ENCODE measurements at regions of chr12 and their contacts with region 1.

Region 1: GRCh38 chr12:93390549-93391297 is 13.0 kb downstream of the NUDT4 start:
- DNase-seq: no peak
- H3K4me3 ChIP-seq: no peak overlapping the region
- H3K4me3 Mint-ChIP-seq: no peak overlapping the region
- H3K27ac ChIP-seq: no peak overlapping the region
- H3K27ac Mint-ChIP-seq: peak overlapping the region in 3 of 7 donors; percentile 28 to 71 (median 40)
- H3K4me1 ChIP-seq: peaks cover 14 to 16% of the 10 kb centered on the region in 2 donors
- H3K4me1 Mint-ChIP-seq: peaks cover 22% of the 10 kb centered on the region
- H3K27me3 ChIP-seq: no peaks in the 10 kb centered on the region
- H3K27me3 Mint-ChIP-seq: peaks cover 0 to 2% (median 0%) of the 10 kb centered on the region in 3 donors
- CTCF ChIP-seq: no peak

Region 2: DNA sequence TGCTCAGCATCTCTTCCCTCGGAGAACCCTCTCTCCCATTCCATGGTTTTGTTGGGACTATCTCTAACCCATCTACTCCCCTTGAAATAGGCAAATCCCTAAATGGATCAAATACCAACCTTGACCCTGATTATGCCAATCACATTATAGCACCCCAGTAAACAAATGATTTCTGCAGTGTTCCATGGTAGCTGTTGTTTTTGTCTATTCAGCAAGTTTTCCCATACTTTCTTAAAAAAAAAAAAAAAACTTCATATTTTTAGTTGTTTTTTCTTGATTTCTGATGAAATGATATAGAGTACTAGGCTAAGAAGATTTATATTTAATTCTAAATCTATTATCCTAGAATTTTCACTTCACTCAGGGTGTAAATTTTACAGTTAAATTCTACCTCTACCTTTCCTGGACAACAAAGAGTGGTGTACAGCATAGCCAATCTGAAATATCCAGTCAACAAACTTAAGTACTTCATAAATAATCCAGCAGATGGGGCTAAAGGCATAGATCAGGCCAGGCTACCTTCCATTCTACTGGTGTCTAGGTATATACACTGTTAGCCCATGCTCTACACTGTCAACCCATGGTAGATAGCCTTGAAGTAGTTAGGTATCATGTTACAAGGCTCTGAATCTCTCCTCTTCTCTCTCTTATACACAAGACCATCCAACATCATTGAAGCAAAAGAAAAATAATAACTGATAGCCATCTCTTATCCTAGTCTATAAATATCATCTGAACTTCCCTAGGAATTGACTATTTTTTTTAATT is 605.7 kb before region 1 on chr12:
- intact Hi-C with region 1: loop called in 1 of 2 experiments (anchors 10 kb)
- DNase-seq: peak; percentile 27 to 54 (median 45)
- H3K4me3 ChIP-seq: no peak overlapping the region
- H3K4me3 Mint-ChIP-seq: no peak overlapping the region
- H3K27ac ChIP-seq: no peak overlapping the region
- H3K27ac Mint-ChIP-seq: peak overlapping the region in 1 of 7 donors; percentile 37
- H3K4me1 ChIP-seq: peaks cover 0 to 3% of the 10 kb centered on the region in 2 donors
- H3K4me1 Mint-ChIP-seq: peaks cover 15% of the 10 kb centered on the region
- H3K27me3 ChIP-seq: no peaks in the 10 kb centered on the region
- H3K27me3 Mint-ChIP-seq: peaks cover 0 to 2% (median 0%) of the 10 kb centered on the region in 3 donors
- CTCF ChIP-seq: peak; percentile 68

Region 3: DNA sequence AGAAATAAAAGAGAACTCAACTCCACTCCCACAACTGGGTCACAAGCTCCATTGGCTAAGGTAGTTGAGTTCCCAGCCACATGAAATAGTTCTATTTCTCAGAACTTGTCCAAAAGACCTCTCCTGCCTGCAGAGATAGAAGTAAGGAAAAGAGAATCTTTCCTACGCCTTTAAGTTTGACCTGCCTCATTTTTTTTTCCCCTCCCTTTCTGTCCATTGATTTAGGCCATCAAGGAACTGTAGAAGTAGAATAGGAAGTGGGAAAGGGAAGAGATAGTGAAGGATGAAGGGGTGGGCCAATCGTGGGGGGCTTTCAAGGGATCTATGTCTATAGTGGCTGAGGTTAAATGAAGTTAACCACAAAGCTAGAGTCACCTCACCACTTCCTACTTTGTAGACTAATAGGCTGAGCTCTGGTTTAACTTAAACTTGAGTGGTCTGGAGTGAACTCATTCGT is 26.9 kb before region 1 on chr12:
- intact Hi-C with region 1: no loop called
- DNase-seq: peak in 1 of 3 donors; percentile 11
- H3K4me3 ChIP-seq: no peak overlapping the region
- H3K4me3 Mint-ChIP-seq: no peak overlapping the region
- H3K27ac ChIP-seq: no peak overlapping the region
- H3K27ac Mint-ChIP-seq: peak overlapping the region in 1 of 7 donors; percentile 11
- H3K4me1 ChIP-seq: peaks cover 0 to 8% of the 10 kb centered on the region in 2 donors
- H3K4me1 Mint-ChIP-seq: peaks cover 8% of the 10 kb centered on the region
- H3K27me3 ChIP-seq: peaks cover 2% of the 10 kb centered on the region in 2 donors
- H3K27me3 Mint-ChIP-seq: peaks cover 2 to 17% (median 8%) of the 10 kb centered on the region in 3 donors
- CTCF ChIP-seq: no peak